Body of pancreas (tissue), 4 donors: ENCODE measurements at regions of chrX and their contacts with region 1.

Region 1: GRCh38 chrX:40266490-40267333 is 169.0 kb upstream of the BCOR start:
- DNase-seq: peak; percentile 66 to 73 (median 71)
- ATAC-seq: peak; percentile 88
- H3K4me3 ChIP-seq: peak overlapping the region in 1 of 2 donors; percentile 27
- H3K27ac ChIP-seq: peak overlapping the region in 2 of 4 donors; percentile 53 to 68
- H3K4me1 ChIP-seq: peaks cover 5% of the 10 kb centered on the region
- H3K27me3 ChIP-seq: no peaks in the 10 kb centered on the region
- CTCF ChIP-seq: peak; percentile 45 to 77 (median 72)
- POLR2A ChIP-seq: peak in 1 of 3 donors; percentile 13

Region 2: GRCh38 chrX:39730662-39731397 is 535.9 kb before region 1 on chrX:
- intact Hi-C with region 1: loop called (anchors 10 kb)
- DNase-seq: peak; percentile 72 to 82 (median 78)
- ATAC-seq: peak; percentile 80
- H3K4me3 ChIP-seq: no peak overlapping the region
- H3K27ac ChIP-seq: peak overlapping the region; percentile 16 to 53 (median 36)
- H3K4me1 ChIP-seq: peaks cover 46% of the 10 kb centered on the region
- H3K27me3 ChIP-seq: no peaks in the 10 kb centered on the region
- CTCF ChIP-seq: peak; percentile 28 to 71 (median 69)
- POLR2A ChIP-seq: no peak

Region 3: GRCh38 chrX:40213092-40213491 is 53.6 kb before region 1 on chrX:
- intact Hi-C with region 1: no loop called
- DNase-seq: no peak
- ATAC-seq: no peak
- H3K4me3 ChIP-seq: no peak overlapping the region
- H3K27ac ChIP-seq: no peak overlapping the region
- H3K4me1 ChIP-seq: no peaks in the 10 kb centered on the region
- H3K27me3 ChIP-seq: no peaks in the 10 kb centered on the region
- CTCF ChIP-seq: no peak
- POLR2A ChIP-seq: no peak

Region 4: GRCh38 chrX:40468033-40468846 is 201.5 kb after region 1 on chrX:
- intact Hi-C with region 1: no loop called
- DNase-seq: peak; percentile 49 to 80 (median 63)
- ATAC-seq: peak; percentile 80
- H3K4me3 ChIP-seq: no peak overlapping the region
- H3K27ac ChIP-seq: peak overlapping the region; percentile 8 to 74 (median 42)
- H3K4me1 ChIP-seq: peaks cover 27% of the 10 kb centered on the region
- H3K27me3 ChIP-seq: no peaks in the 10 kb centered on the region
- CTCF ChIP-seq: peak in 5 of 7 experiments; percentile 29 to 50 (median 40)
- POLR2A ChIP-seq: peak in 2 of 3 donors; percentile 14 to 28

Region 5: GRCh38 chrX:40709395-40709794 is 442.7 kb after region 1 on chrX:
- intact Hi-C with region 1: no loop called
- DNase-seq: no peak
- ATAC-seq: no peak
- H3K4me3 ChIP-seq: no peak overlapping the region
- H3K27ac ChIP-seq: no peak overlapping the region
- H3K4me1 ChIP-seq: no peaks in the 10 kb centered on the region
- H3K27me3 ChIP-seq: no peaks in the 10 kb centered on the region
- CTCF ChIP-seq: no peak
- POLR2A ChIP-seq: no peak